PC-3 (cell line): ENCODE measurements at regions of chr6 and their contacts with region 1.

Region 1: GRCh38 chr6:111361648-111362047 is 121.4 kb downstream of the REV3L start:
- DNase-seq: peak; percentile 48
- ATAC-seq: peak; percentile 30; the same call in 1 of the 2 replicates
- H3K4me3 ChIP-seq: no peak overlapping the region
- H3K27ac ChIP-seq: no peak overlapping the region
- H3K4me1 ChIP-seq: peaks cover 14% of the 10 kb centered on the region
- H3K27me3 ChIP-seq: no peaks in the 10 kb centered on the region
- CTCF ChIP-seq: peak; percentile 62

Region 2: GRCh38 chr6:110981202-110981600 is 380.4 kb before region 1 on chr6:
- CTCF ChIA-PET with region 1: no interaction called
- POLR2A ChIA-PET with region 1: no interaction called
- intact Hi-C with region 1: no loop called
- DNase-seq: no peak
- ATAC-seq: no peak
- H3K4me3 ChIP-seq: peak overlapping the region; percentile 84
- H3K27ac ChIP-seq: no peak overlapping the region
- H3K4me1 ChIP-seq: peaks cover 9% of the 10 kb centered on the region
- H3K27me3 ChIP-seq: no peaks in the 10 kb centered on the region
- CTCF ChIP-seq: no peak

Region 3: DNA sequence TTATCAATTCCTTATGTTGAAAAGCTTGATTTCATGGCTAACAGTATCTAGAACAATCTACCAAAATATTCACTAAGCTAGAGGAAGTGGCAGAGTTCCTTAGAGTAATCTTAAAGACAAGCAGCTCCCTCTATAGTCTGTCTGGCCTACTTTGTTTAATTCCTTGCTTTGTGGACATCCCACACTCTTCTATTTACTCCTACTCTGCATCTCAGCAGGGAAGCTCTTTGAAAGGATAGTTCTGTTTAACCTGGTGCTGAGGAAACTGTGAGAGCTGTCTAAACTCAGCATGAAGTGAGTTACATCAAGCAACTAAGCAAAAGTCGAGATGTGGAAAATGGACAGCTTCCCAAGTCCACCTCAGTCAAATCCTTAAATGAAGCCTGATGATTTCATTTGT is 117.1 kb after region 1 on chr6:
- CTCF ChIA-PET with region 1: interaction called, 14 read pairs
- POLR2A ChIA-PET with region 1: no interaction called
- intact Hi-C with region 1: loop called (anchors 1 kb)
- DNase-seq: peak; percentile 57
- ATAC-seq: peak; percentile 35
- H3K4me3 ChIP-seq: no peak overlapping the region
- H3K27ac ChIP-seq: no peak overlapping the region
- H3K4me1 ChIP-seq: peaks cover 27% of the 10 kb centered on the region
- H3K27me3 ChIP-seq: no peaks in the 10 kb centered on the region
- CTCF ChIP-seq: peak; percentile 62

Region 4: GRCh38 chr6:111642463-111643158 is 281.0 kb after region 1 on chr6:
- CTCF ChIA-PET with region 1: no interaction called
- POLR2A ChIA-PET with region 1: no interaction called
- intact Hi-C with region 1: loop called (anchors 5 kb)
- DNase-seq: peak; percentile 65
- ATAC-seq: peak; percentile 78
- H3K4me3 ChIP-seq: no peak overlapping the region
- H3K27ac ChIP-seq: no peak overlapping the region
- H3K4me1 ChIP-seq: no peaks in the 10 kb centered on the region
- H3K27me3 ChIP-seq: no peaks in the 10 kb centered on the region
- CTCF ChIP-seq: peak; percentile 72